Activated T-helper 2 cell treated with anti-CD3 and anti-CD28 coated beads, Interferon-gamma antibody, Interleukin-2, Interleukin-4, amounts not matched to agents 10 μg/mL and 5 μg/mL and 100 μg/mL, durations not matched to agents 14 hours and 24 hours and 36 hours (primary cell): ENCODE measurements at regions of chr14 and their contacts with region 1.

Region 1: GRCh38 chr14:67426983-67427606 is 15.1 kb upstream of the PLEK2 start:
- DNase-seq: peak; percentile 57
- H3K4me3 Mint-ChIP-seq: no peak overlapping the region
- H3K27ac Mint-ChIP-seq: no peak overlapping the region
- H3K4me1 Mint-ChIP-seq: peaks cover 4% of the 10 kb centered on the region
- H3K27me3 Mint-ChIP-seq: peaks cover 39% of the 10 kb centered on the region

Region 2: GRCh38 chr14:66920196-66920595 is 506.9 kb before region 1 on chr14:
- intact Hi-C with region 1: no loop called
- DNase-seq: no peak
- H3K4me3 Mint-ChIP-seq: no peak overlapping the region
- H3K27ac Mint-ChIP-seq: no peak overlapping the region
- H3K4me1 Mint-ChIP-seq: no peaks in the 10 kb centered on the region
- H3K27me3 Mint-ChIP-seq: no peaks in the 10 kb centered on the region

Region 3: GRCh38 chr14:67440541-67440940 is 13.4 kb after region 1 on chr14:
- intact Hi-C with region 1: no loop called
- DNase-seq: no peak
- H3K4me3 Mint-ChIP-seq: no peak overlapping the region
- H3K27ac Mint-ChIP-seq: no peak overlapping the region
- H3K4me1 Mint-ChIP-seq: no peaks in the 10 kb centered on the region
- H3K27me3 Mint-ChIP-seq: peaks cover 25% of the 10 kb centered on the region

Region 4: DNA sequence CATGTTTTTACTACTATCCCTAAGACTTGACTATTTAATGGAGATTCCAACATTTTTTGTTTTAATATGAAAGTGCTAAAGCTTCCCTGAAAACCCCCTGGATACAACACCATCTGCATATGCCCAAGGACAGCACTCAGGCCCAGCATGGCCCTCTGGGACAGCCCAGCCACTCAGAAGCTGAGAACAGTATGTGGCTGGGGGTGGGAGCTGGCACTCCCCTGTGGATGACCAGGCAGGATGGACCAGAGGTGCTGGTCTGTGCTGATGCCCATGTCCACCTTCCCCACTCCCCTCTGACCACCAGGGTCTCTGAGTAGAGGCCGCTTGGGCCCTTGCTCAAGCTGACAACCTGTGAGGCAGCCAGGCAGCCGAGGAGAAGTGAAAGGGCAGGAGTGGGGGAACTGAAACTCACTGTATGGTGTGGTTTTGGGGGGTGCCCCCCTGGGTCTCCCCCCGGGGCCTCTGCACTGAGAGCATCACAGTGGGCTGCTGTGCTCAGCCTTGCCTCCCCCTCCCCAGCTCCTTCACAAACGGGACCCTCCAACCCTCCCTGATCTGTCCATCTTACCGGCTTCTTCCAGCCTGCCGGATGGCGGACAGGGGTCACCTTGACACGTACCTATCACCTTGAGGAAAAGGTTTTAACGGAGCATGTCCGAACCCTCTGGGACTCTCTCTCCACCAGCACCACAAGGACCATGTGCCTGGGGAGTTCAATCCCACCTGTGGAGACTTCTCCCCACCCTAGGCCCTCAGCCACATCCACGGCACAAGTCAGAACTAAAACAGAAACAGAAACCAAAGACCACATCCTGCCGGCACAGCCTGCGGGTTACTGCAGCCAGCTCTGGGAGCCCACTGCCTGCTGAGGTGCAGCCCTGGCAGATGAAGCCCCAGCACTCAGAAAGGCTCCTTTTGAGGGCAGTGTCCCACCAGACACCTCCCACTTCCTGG is 61.1 kb after region 1 on chr14 and contains the start of gene TMEM229B:
- intact Hi-C with region 1: loop called (anchors 2 kb)
- DNase-seq: peak; percentile 80
- H3K4me3 Mint-ChIP-seq: peak within 1 kb of the TSS; percentile 72
- H3K27ac Mint-ChIP-seq: peak within 1 kb of the TSS; percentile 82
- H3K4me1 Mint-ChIP-seq: peaks cover 30% of the 10 kb centered on the region
- H3K27me3 Mint-ChIP-seq: peaks cover 20% of the 10 kb centered on the region
- total RNA-seq, gene TMEM229B: 0.71 and 0.75 TPM in 2 replicates

Region 5: DNA sequence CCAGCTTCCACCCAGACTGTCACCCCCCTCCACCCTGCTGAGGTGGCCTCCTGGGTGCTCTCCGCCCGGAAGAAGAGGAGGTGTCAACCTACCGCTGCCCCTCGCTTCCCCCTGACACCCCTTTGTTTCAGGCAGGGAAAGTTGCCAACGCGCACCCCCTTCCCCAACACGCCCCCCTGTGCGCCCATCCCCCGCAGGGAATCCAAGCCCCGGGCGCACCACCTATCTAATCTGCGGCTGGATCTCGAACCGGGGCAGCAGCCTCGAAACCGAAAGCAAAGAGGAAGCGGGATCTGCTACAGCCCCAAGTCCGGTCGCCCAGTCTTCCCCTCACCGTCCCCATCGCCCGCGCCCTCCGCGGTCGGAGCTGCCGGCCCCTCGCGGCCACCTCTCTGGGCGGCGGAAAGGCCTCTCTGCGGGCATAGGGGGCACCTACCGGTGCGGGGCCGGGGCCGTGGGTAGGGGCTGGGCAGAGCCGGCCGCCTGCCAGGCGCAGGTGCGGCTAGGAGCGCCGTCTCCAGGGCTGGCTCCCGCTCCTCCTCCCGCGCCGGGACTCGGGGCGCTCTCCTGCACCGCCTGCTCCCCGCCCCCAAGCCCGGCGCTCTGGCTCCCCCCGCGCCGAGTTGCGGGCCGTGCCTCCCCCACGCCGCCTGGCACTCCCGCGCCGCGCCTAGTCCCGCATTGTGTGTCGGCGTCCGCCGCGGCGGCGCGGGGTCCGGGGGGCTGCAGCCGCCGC is 87.7 kb after region 1 on chr14:
- intact Hi-C with region 1: loop called (anchors 5 kb)
- DNase-seq: peak; percentile 47
- H3K4me3 Mint-ChIP-seq: peak overlapping the region; percentile 81
- H3K27ac Mint-ChIP-seq: no peak overlapping the region
- H3K4me1 Mint-ChIP-seq: peaks cover 2% of the 10 kb centered on the region
- H3K27me3 Mint-ChIP-seq: peaks cover 76% of the 10 kb centered on the region

Region 6: DNA sequence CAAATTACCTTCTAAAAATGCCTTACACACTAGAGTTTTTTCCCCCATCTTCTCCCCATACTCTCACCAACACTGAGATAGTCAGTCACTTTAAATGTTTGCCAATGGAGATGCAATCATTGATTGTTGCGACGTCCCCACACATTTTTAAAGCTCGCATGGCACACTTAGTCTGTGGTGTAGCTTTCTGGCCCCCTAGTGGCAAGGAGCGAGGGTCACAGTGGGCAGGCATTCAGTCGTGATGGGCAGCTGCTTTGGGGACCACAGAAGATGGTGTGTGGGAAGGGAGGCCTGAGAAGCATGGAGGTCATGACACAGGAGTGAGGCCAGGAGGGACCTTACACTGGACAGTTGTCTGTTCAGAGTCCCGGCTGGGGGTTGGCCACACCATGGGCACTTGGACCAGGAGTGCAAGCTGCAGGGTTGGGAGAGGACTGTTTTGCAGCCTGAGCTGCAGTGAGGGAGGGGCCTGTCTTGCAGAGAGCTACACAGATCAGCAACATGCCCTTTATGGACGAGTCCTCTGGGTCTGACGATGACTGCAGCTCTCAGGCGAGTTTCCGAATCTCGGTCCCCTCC is 144.3 kb after region 1 on chr14:
- intact Hi-C with region 1: loop called (anchors 1 kb)
- DNase-seq: peak; percentile 49
- H3K4me3 Mint-ChIP-seq: no peak overlapping the region
- H3K27ac Mint-ChIP-seq: no peak overlapping the region
- H3K4me1 Mint-ChIP-seq: no peaks in the 10 kb centered on the region
- H3K27me3 Mint-ChIP-seq: peaks cover 3% of the 10 kb centered on the region

Region 7: GRCh38 chr14:67666750-67667449 is 239.8 kb after region 1 on chr14:
- intact Hi-C with region 1: loop called (anchors 2 kb)
- DNase-seq: no peak
- H3K4me3 Mint-ChIP-seq: no peak overlapping the region
- H3K27ac Mint-ChIP-seq: peak overlapping the region; percentile 43
- H3K4me1 Mint-ChIP-seq: peaks cover 27% of the 10 kb centered on the region
- H3K27me3 Mint-ChIP-seq: no peaks in the 10 kb centered on the region

Region 8: DNA sequence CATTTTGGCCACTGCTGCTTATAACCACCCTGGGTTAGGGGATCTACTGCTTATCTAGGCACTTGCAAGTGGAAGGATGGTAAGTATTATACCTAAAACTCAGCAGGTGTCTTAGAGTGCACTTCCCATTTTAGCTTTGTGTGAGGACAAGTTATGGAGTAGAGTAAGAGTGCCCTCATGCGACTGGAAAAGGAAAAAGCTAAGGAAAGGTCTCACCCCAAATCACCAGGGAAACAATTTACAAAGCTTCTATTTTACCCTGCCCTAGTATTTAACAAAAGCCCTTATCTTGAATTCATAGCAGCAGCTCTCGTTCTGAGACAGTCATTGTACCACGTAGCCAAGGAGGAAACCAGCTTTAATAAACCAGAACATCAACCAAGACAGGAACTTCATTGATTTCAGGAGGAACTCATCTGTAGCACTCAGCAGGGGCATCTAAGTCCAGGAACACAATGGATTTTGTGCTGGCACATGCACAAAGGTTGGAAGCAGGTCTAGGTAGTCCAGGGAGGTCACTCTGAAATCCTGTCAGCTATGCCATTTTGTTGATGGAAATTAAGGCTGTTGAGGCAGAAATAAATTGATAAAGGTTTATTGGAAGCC is 277.5 kb after region 1 on chr14:
- intact Hi-C with region 1: loop called (anchors 5 kb)
- DNase-seq: peak; percentile 18
- H3K4me3 Mint-ChIP-seq: no peak overlapping the region
- H3K27ac Mint-ChIP-seq: no peak overlapping the region
- H3K4me1 Mint-ChIP-seq: peaks cover 2% of the 10 kb centered on the region
- H3K27me3 Mint-ChIP-seq: peaks cover 9% of the 10 kb centered on the region